Activated CD4-positive, alpha-beta memory T cell treated with anti-CD3 and anti-CD28 coated beads for 36 hours (primary cell): ENCODE measurements at regions of chr12 and their contacts with region 1.

Region 1: DNA sequence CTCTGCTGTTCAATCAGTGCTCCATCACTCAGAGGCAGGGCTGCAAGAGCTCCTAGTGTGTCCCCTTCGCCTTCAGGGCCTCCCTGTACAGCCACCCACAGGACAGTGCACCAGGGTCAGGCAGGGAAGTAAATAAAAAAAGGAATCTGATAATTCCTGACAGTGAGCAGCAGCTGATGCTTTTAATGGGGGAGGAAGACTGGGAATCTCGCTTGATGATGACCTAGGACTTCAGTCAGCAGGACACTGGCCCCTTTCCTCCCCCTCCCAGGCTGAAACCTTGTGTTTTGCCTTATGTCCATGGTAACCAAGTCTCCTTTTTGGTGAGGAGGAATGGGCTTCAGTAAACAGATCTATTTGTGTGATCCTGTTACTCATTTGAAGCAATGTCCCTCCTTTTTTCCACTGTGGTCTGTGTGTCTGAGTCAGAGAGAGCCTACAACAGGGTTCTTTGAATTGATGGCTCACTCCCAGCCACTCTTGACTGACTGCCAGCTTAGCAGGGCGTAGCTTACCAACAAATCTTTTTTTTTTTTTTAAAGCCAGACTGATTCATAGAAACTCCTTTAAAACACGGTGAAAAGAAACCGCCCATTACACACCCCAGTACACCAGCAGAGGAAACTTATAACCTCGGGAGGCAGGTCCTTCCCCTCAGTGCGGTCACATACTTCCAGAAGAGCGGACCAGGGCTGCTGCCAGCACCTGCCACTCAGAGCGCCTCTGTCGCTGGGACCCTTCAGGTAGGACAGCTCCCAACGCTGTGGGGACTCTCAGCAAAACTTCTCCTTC is at the start of gene EMP1:
- DNase-seq: peak; percentile 89
- H3K4me3 Mint-ChIP-seq: peak within 1 kb of the TSS; percentile 83
- H3K27ac Mint-ChIP-seq: peak within 1 kb of the TSS; percentile 79
- H3K4me1 Mint-ChIP-seq: peaks cover 29% of the 10 kb centered on the region
- H3K27me3 Mint-ChIP-seq: peaks cover 4% of the 10 kb centered on the region
- total RNA-seq, gene EMP1: 54.4 to 57.3 TPM

Region 2: GRCh38 chr12:12899530-12900380 is 296.6 kb before region 1 on chr12:
- CTCF ChIA-PET with region 1: no interaction called
- POLR2A ChIA-PET with region 1: interaction called, 3 read pairs
- intact Hi-C with region 1: loop called (anchors 1 kb)
- DNase-seq: peak; percentile 86
- H3K4me3 Mint-ChIP-seq: no peak overlapping the region
- H3K27ac Mint-ChIP-seq: peak overlapping the region; percentile 77
- H3K4me1 Mint-ChIP-seq: peaks cover 19% of the 10 kb centered on the region
- H3K27me3 Mint-ChIP-seq: peaks cover 16% of the 10 kb centered on the region

Region 3: DNA sequence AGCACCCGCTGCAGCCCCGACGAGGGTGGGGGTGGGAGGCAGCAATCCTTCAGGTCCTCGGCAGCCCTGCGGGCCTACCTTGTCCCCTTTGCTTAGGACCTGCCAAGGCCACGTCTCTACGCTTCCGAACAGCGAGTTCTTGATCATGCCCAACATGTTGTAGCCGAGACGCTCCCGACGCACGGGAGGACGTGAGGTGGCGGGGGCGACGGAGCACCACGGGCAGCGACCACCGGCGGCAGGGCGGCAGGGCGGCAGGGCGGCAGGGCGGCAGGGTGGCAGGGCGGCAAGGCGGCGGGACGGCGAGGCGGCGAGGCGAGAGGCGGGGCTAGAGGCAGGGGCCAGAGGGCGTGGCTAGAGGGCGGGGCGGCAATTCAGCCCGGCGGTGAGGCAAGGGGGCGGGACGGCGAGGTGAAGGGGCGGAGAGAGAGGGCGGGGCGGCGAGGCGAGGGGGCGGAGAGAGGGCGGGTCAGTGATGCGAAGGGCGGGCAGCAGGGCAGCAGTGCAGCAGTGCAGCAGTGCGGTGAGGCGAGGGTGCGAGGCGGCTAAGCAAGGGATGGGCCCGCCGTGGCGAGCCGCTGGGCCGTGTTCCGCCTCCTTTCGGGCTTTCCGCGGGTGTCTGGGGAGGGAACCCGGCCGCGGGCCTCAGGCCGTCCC is 196.2 kb before region 1 on chr12 and contains the start of gene HEBP1:
- CTCF ChIA-PET with region 1: no interaction called
- POLR2A ChIA-PET with region 1: no interaction called
- intact Hi-C with region 1: loop called (anchors 5 kb)
- DNase-seq: peak; percentile 97
- H3K4me3 Mint-ChIP-seq: peak within 1 kb of the TSS; percentile 82
- H3K27ac Mint-ChIP-seq: peak within 1 kb of the TSS; percentile 53
- H3K4me1 Mint-ChIP-seq: peaks cover 25% of the 10 kb centered on the region
- H3K27me3 Mint-ChIP-seq: peaks cover 6% of the 10 kb centered on the region
- total RNA-seq, gene HEBP1: 20.5 to 22.4 TPM

Region 4: DNA sequence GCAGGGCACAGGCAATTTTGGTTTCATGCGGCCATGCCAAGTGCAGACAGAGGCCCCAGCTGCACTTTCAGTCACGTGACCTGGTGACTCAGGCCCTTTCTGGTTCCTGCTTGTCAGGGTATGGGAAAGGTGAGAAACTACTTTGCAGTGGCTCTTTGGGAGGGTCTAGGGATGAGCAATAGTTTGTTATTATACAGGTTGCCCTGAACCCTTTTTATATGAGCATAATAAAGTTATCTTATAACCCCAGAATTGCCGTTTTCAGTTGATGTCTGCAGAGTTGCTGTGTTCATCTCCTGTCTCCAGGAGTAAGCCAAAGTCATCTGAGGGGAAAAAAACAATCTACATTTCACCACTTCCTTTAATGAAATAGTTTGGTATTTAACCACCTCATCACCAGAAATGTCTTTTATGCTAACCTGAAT is 30.7 kb before region 1 on chr12:
- CTCF ChIA-PET with region 1: no interaction called
- POLR2A ChIA-PET with region 1: interaction called, 3 read pairs
- intact Hi-C with region 1: loop called (anchors 1 kb)
- DNase-seq: peak; percentile 92
- H3K4me3 Mint-ChIP-seq: no peak overlapping the region
- H3K27ac Mint-ChIP-seq: peak overlapping the region; percentile 52
- H3K4me1 Mint-ChIP-seq: peaks cover 25% of the 10 kb centered on the region
- H3K27me3 Mint-ChIP-seq: peaks cover 5% of the 10 kb centered on the region

Region 5: DNA sequence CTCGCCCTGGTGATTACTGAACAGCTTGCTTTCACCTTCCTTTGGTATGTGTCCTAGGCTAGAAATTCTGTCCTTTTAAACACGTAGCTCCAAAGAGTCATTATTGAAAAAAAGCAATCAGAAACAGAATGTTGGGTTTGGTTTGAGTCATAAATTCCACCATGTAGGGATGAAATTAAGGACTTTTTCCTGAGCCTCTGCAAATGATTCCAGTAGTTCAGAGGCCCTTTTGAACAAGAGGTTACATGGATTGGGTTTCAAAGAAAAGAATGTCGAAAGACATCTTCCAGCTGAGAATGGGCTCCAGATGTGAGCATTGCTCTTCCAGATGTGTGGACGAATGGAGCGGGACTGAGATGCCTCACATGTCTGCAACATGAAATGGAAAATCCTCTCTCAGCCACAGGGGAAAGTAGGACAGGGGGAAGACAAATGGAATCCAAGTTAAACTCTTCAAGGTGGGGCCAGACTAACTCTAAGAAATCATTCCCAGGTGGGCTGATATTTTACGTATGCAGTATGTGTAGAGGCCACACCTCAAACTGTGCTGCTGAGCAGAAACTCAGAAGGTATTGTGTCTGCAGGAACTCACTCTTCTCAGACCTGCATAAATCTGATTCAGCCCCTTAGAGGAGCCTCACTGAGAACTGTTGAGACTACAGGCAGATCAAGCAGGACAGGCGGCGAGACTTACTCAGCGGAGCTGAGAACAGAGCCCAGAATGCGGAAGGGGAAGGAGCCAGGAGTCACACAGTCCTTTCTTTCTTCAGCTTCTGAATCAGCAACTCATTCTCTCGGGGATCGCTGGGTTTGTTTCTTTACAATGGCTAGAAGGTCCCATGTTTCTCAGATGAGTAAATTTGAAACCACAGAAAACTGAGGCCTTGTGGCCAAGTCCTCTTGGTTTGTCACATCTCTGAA is 23.1 kb before region 1 on chr12:
- CTCF ChIA-PET with region 1: no interaction called
- POLR2A ChIA-PET with region 1: interaction called, 6 read pairs
- intact Hi-C with region 1: loop called (anchors 1 kb)
- DNase-seq: peak; percentile 78
- H3K4me3 Mint-ChIP-seq: no peak overlapping the region
- H3K27ac Mint-ChIP-seq: no peak overlapping the region
- H3K4me1 Mint-ChIP-seq: peaks cover 19% of the 10 kb centered on the region
- H3K27me3 Mint-ChIP-seq: peaks cover 21% of the 10 kb centered on the region

Region 6: DNA sequence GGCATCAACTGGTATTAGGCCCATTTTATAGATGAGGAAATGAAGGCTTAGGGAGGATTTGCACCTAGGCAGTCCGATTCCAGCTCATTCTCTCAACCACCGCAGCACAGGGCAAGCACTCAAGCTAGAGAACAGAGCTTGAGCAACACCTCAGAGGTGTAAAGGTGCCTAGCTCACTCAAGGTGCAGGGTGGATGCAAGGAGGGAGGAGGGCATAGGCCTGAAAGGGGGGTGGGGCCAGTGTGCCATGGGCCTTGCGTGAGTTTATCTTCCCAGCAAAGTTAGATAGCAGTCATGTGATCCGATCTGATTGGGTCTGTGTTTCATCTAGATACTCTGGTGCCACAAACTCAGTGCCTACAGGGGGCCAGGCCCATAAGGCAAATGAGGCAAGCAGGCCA is 10.0 kb before region 1 on chr12:
- CTCF ChIA-PET with region 1: no interaction called
- POLR2A ChIA-PET with region 1: no interaction called
- intact Hi-C with region 1: no loop called
- DNase-seq: no peak
- H3K4me3 Mint-ChIP-seq: no peak overlapping the region
- H3K27ac Mint-ChIP-seq: no peak overlapping the region
- H3K4me1 Mint-ChIP-seq: no peaks in the 10 kb centered on the region
- H3K27me3 Mint-ChIP-seq: peaks cover 10% of the 10 kb centered on the region

Region 7: DNA sequence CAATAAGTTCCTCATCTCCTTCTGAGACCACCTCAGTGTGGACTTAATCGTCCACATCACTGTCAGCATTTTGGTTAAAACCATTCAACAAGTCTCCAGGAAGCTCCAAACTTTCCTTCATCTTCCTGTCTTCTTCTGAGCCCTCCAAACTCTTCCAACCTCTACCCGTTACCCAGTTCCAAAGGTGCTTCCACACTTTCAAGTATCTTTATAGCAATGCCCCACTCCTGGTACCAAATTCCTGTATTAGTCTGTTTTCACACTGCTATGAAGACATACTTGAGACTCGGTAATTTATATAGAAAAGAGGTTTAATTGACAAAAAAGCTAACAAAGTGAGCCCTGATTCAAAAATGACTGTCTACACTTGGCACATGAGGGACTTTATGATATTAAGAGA is 23.0 kb after region 1 on chr12:
- CTCF ChIA-PET with region 1: no interaction called
- POLR2A ChIA-PET with region 1: no interaction called
- intact Hi-C with region 1: no loop called
- DNase-seq: no peak
- H3K4me3 Mint-ChIP-seq: no peak overlapping the region
- H3K27ac Mint-ChIP-seq: no peak overlapping the region
- H3K4me1 Mint-ChIP-seq: no peaks in the 10 kb centered on the region
- H3K27me3 Mint-ChIP-seq: no peaks in the 10 kb centered on the region

Region 8: GRCh38 chr12:13347241-13348043 is 151.1 kb after region 1 on chr12:
- CTCF ChIA-PET with region 1: no interaction called
- POLR2A ChIA-PET with region 1: no interaction called
- intact Hi-C with region 1: no loop called
- DNase-seq: peak; percentile 76
- H3K4me3 Mint-ChIP-seq: no peak overlapping the region
- H3K27ac Mint-ChIP-seq: peak overlapping the region; percentile 18
- H3K4me1 Mint-ChIP-seq: peaks cover 11% of the 10 kb centered on the region
- H3K27me3 Mint-ChIP-seq: peaks cover 33% of the 10 kb centered on the region